ENCODE measurements at regions of chr10 and their contacts with region 1.

Region 1: GRCh38 chr10:75910032-75910431 is 478.6 kb downstream of the LRMDA start:
- DNase-seq: peak; percentile 29
- H3K4me3 ChIP-seq: no peak overlapping the region
- H3K27ac ChIP-seq: no peak overlapping the region
- H3K4me1 ChIP-seq: no peaks in the 10 kb centered on the region
- H3K27me3 ChIP-seq: no peaks in the 10 kb centered on the region
- CTCF ChIP-seq: peak; percentile 14 to 16
- POLR2A ChIP-seq: no peak

Region 2: DNA sequence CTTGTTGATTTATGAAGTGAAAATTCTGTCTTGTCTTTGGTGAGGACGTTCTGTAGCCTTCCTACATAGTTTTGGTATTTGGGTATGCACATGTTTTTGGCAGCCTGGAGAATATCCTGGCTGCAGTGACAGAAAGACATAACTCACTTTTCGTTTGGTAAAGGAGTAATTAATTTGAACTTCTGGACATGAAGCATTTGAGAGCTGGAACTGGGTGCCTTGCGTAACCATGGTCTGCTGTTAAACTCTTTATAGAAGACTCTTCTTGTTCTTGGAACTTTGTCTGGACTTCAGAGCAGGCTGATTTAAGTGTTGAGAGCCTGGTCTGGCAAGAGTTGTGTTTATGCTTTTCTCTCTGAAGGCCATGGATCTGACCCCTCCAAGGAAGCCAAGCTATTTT is 247.3 kb before region 1 on chr10:
- CTCF ChIA-PET with region 1: no interaction called
- POLR2A ChIA-PET with region 1: no interaction called
- dilution Hi-C with region 1: no loop called
- intact Hi-C with region 1: no loop called
- DNase-seq: no peak
- H3K4me3 ChIP-seq: no peak overlapping the region
- H3K27ac ChIP-seq: no peak overlapping the region
- H3K4me1 ChIP-seq: no peaks in the 10 kb centered on the region
- H3K27me3 ChIP-seq: no peaks in the 10 kb centered on the region
- CTCF ChIP-seq: no peak
- POLR2A ChIP-seq: no peak

Region 3: DNA sequence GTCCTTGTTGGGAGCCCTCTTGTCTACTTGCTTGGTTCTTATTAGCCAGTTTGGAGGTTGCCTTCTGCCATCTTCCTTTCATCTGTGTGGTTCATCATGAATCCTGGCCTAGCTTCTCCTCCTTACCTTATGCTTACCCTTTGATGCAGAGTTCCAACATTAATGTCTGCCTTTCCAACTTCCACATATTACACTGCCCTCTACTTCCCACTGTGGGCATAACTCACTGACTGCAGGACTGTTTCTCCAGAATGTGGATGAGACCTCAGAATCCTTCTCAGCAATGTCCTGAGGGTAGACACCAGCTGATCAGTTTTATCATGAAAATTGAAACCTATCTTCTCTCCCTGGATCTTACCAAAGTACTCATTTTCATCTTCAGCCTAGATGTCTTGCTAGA is 12.4 kb after region 1 on chr10:
- CTCF ChIA-PET with region 1: interaction called, 12 read pairs
- POLR2A ChIA-PET with region 1: no interaction called
- dilution Hi-C with region 1: no loop called
- intact Hi-C with region 1: no loop called
- DNase-seq: no peak
- H3K4me3 ChIP-seq: no peak overlapping the region
- H3K27ac ChIP-seq: no peak overlapping the region
- H3K4me1 ChIP-seq: no peaks in the 10 kb centered on the region
- H3K27me3 ChIP-seq: no peaks in the 10 kb centered on the region
- CTCF ChIP-seq: no peak
- POLR2A ChIP-seq: no peak